ENCODE measurements at regions of chr12 and their contacts with region 1.

Region 1: DNA sequence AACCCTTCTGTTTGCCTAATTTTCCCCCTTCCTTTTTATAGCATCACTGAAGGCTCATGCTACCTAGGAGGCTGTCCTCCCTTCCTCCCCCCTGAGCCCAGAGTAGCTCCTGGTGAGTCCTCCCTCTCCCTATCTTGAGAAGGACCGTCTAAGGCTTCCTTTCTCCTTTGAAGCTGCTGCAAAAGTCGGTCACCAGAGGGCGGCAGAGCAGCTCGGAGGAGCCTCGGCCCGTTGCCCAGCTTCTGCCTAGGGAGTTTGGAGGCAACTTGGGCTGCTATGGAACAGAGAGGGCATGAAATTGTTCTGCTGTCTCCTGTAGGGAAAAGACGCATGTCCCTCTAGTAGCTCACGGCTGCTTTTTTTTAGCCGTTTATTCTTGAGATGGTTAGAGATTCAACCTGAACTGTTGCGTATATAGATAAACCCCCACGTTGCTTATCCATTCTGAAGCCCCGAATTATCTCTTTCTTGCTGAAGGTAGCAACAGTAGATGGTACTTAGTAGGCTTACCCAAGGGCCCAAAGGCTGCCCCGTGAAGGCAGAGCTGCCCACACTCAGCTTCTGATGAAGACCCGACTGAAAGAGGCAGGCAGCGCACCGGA is 5.7 kb downstream of the WNT5B start:
- DNase-seq: peak; percentile 89
- H3K4me3 ChIP-seq: no peak overlapping the region
- H3K27ac ChIP-seq: no peak overlapping the region
- H3K4me1 ChIP-seq: peaks cover 4% of the 10 kb centered on the region
- H3K27me3 ChIP-seq: no peaks in the 10 kb centered on the region
- CTCF ChIP-seq: peak; percentile 36 to 67 (median 64)
- POLR2A ChIP-seq: no peak

Region 2: GRCh38 chr12:1939801-1940607 is 305.3 kb after region 1 on chr12:
- intact Hi-C with region 1: loop called (anchors 10 kb)
- DNase-seq: peak; percentile 93
- H3K4me3 ChIP-seq: no peak overlapping the region
- H3K27ac ChIP-seq: peak overlapping the region in 1 of 2 donors; percentile 10
- H3K4me1 ChIP-seq: peaks cover 14% of the 10 kb centered on the region
- H3K27me3 ChIP-seq: no peaks in the 10 kb centered on the region
- CTCF ChIP-seq: peak; percentile 96 to 97 (median 96)
- POLR2A ChIP-seq: no peak

Measured in testis (tissue), 5 donors.